ENCODE measurements at regions of chr4 and their contacts with region 1.

Region 1: DNA sequence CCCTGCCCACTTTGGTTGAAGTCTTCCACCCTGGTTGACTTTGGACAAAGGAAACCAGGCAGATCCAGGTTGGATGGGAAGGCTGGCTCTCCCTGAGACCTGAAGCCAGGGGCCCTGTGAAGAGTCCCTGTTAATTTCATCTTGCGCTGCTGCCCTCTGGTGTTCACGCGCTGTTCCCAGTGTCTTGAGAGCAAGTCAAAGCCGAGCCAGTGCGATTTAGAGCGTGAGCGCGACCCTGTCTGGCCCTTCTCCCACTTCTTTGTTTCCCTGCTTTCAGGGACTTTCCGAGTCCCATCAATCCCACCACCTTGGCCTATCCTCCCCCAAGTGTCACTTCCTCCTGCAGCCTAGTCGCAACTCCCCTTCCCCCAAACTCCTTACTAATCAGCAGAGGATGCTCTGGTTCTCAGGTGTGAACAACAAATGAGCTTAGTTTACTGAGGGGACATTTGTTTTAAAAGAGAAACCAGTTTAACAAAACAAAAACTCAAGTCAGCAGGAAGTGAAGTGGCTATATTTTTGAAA is 25.8 kb upstream of the CHRNA9 start:
- DNase-seq: peak; percentile 90
- H3K4me3 ChIP-seq: peak overlapping the region; percentile 58
- H3K27ac ChIP-seq: peak overlapping the region; percentile 90
- H3K4me1 ChIP-seq: peaks cover 55% of the 10 kb centered on the region
- CTCF ChIP-seq: peak; percentile 96

Region 2: GRCh38 chr4:39527273-39528060 is 781.8 kb before region 1 on chr4 and contains the start of gene UGDH:
- CTCF ChIA-PET with region 1: no interaction called
- POLR2A ChIA-PET with region 1: no interaction called
- intact Hi-C with region 1: loop called (anchors 10 kb)
- DNase-seq: peak; percentile 95
- H3K4me3 ChIP-seq: peak within 1 kb of the TSS; percentile 80
- H3K27ac ChIP-seq: no peak within 1 kb of the TSS
- H3K4me1 ChIP-seq: peaks cover 16% of the 10 kb centered on the region
- CTCF ChIP-seq: no peak; the same call in 1 of the 2 replicates
- total RNA-seq, gene UGDH: 8.1 and 9.8 TPM in 2 replicates

Region 3: GRCh38 chr4:39977489-39978377 is 331.6 kb before region 1 on chr4 and contains the start of gene PDS5A:
- CTCF ChIA-PET with region 1: no interaction called
- POLR2A ChIA-PET with region 1: interaction called, 4 read pairs
- intact Hi-C with region 1: loop called (anchors 5 kb)
- DNase-seq: peak; percentile 96
- H3K4me3 ChIP-seq: peak within 1 kb of the TSS; percentile 86
- H3K27ac ChIP-seq: peak within 1 kb of the TSS; percentile 86
- H3K4me1 ChIP-seq: peaks cover 25% of the 10 kb centered on the region
- CTCF ChIP-seq: peak; percentile 80
- total RNA-seq, gene PDS5A: 65.3 and 69.5 TPM in 2 replicates

Region 4: GRCh38 chr4:40149960-40150385 is 159.3 kb before region 1 on chr4:
- CTCF ChIA-PET with region 1: interaction called, 6 read pairs
- POLR2A ChIA-PET with region 1: interaction called, 8 read pairs
- intact Hi-C with region 1: loop called (anchors 1 kb)
- DNase-seq: peak; percentile 93
- H3K4me3 ChIP-seq: no peak overlapping the region
- H3K27ac ChIP-seq: no peak overlapping the region
- H3K4me1 ChIP-seq: peaks cover 22% of the 10 kb centered on the region
- CTCF ChIP-seq: peak; percentile 92

Region 5: GRCh38 chr4:40193016-40193571 is 116.2 kb before region 1 on chr4:
- CTCF ChIA-PET with region 1: interaction called, 3 read pairs
- POLR2A ChIA-PET with region 1: interaction called, 48 read pairs
- intact Hi-C with region 1: loop called (anchors 2 kb)
- DNase-seq: peak; percentile 84
- H3K4me3 ChIP-seq: peak overlapping the region; percentile 79
- H3K27ac ChIP-seq: peak overlapping the region; percentile 93
- H3K4me1 ChIP-seq: peaks cover 76% of the 10 kb centered on the region
- CTCF ChIP-seq: peak; percentile 37; the same call in 1 of the 2 replicates

Region 6: DNA sequence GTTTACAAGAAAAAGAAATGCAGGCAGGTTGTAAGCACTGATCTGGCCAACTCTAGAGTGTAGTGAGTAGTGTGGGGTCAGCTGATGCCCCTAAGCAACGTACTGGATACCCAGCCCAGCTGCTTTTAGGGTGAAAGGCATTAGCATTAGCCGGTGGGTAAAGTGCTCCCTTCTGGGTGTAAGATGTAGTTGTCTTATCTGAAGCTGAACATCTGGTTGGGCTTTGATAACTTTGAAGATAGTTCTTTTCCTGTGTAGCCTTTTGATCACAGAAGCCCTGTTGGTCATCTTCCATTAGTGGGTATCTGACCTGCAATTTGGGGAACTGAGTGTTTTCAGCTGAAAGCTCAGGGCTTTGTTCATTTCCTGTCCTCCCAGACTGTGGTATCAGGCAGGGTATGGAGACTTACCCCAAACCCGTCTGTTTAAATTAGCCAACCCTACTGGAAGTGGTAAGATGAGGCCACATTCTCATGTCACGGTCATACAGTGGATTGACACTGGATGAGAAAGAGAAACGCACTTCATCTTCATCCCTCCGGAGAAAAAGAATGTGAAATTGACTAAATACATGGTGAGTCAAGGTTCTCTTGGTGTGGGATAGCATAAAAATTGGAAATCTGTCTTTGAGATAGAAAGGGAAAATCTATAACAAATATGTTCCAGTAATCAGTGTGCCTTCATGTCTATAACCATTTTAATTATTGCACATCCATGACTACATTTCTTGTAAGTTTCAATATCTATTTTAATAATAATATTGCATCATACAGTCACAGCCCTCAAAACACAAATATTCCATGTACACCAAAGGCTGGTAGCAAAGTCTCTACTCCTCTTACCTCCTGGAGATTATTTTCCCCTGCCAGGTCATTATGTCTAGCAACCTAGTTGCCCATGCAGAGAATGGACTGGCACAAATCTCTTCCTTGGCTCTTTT is 103.8 kb before region 1 on chr4:
- CTCF ChIA-PET with region 1: interaction called, 3 read pairs
- POLR2A ChIA-PET with region 1: interaction called, 12 read pairs
- intact Hi-C with region 1: loop called (anchors 1 kb)
- DNase-seq: peak; percentile 88
- H3K4me3 ChIP-seq: peak overlapping the region; percentile 79
- H3K27ac ChIP-seq: peak overlapping the region; percentile 93
- H3K4me1 ChIP-seq: peaks cover 90% of the 10 kb centered on the region
- CTCF ChIP-seq: no peak

Measured in OCI-LY7 (cell line).